GM10248 (cell line): ENCODE measurements at regions of chr1 and their contacts with region 1.

Region 1: GRCh38 chr1:225474986-225475820 is 47.4 kb upstream of the LBR start:
- DNase-seq: peak; percentile 88
- CTCF ChIP-seq: peak; percentile 100

Region 2: DNA sequence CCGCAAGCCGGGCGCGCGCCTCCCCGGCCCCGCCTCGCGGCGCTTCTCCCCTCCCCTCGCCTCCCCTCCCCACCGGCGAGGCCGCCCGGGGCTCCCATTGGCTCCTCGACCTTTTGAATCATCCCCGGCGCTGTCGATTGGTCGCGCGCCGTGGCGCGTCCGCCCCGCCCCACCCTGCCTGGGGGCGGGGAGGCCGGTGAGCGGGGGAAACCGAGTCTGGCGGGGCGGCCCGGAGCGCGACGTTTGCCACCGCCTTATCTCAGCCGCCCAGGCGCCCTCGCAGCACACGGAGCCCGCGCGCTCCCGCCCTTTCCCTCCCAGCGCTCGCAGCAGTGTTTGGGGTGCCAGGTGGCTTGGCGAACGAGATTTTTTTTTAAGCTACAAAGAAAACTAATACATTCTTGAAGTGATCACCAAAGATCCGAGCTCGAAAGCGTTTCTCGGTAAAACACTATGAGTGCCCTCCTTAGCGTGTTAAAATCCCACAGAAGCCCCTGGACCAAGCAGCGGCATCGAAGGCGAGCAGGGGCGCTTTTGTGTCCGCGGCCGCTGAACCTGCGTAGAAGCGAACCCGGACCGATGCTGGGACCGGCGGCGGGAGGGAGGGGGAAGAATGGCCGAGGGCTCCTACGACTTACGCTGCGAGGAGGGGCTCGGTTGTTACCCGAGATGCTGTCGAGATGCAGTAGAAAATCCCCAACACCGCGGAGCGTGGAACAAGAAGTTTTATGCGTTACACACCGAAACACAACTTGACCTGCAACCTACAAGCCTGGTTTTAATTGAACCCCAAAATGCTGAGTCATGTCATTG is 46.9 kb before region 1 on chr1:
- CTCF ChIA-PET with region 1: interaction called, 11 read pairs
- POLR2A ChIA-PET with region 1: no interaction called
- DNase-seq: peak; percentile 96
- CTCF ChIP-seq: no peak

Region 3: DNA sequence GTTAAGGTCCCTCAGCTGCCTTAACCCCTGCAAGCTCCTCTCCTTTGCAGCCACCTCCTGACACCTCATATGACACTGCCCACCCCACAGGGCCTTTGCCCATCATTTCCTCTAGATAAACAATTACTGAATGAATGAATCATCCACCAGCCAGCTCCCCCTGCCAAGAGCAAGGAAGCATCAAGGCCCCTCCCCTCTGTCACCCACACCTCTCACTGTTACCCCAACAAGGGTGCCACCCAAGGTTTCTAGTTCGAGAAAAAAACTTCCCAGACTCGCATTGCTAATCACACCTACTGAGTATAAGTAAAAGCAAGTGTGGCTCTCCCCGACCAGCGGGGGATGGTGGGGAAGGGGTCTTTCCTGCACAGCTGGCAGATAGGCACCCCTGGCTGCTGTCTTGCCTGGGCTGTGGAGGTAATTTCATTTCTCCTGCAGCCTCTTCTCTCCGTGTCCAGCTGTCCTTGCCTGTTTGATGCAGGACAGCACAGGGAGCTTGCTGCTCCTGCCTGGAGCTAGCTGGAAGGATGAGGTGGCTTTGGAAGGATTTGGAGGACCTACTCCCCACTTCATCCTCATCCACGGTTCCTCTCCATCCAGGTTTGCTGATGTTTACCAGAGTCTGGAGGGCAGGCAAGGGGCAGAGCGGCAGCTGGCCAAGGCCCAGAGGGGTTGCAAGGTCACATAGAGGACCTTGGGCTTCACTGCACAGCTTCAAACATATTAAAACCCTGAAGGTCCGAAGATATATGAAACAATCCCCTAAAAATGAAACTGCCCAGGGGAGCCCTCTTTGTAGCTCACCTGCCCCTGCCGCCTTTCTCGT is 14.3 kb before region 1 on chr1:
- CTCF ChIA-PET with region 1: interaction called, 27 read pairs
- POLR2A ChIA-PET with region 1: no interaction called
- DNase-seq: no peak
- CTCF ChIP-seq: no peak

Region 4: DNA sequence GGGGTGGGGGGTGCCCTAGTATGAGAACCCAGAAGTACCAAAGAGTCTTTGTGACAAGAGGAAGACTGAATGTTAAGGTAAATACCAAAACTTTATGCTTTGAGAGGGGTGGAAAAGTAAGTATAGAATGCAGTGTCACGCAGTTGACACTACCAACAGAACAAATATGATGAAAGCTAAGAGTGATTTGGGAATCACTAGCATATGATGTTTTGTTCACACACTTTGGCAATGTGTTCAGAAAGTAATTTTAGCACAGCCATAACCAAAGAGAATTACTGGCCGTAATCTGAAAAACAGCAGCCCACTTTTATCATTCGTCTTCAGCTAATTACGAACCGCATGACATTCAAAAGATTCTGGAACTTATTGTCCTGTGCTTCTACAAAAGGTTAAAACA is 118.2 kb after region 1 on chr1:
- CTCF ChIA-PET with region 1: no interaction called
- POLR2A ChIA-PET with region 1: no interaction called
- DNase-seq: no peak
- CTCF ChIP-seq: no peak

Region 5: DNA sequence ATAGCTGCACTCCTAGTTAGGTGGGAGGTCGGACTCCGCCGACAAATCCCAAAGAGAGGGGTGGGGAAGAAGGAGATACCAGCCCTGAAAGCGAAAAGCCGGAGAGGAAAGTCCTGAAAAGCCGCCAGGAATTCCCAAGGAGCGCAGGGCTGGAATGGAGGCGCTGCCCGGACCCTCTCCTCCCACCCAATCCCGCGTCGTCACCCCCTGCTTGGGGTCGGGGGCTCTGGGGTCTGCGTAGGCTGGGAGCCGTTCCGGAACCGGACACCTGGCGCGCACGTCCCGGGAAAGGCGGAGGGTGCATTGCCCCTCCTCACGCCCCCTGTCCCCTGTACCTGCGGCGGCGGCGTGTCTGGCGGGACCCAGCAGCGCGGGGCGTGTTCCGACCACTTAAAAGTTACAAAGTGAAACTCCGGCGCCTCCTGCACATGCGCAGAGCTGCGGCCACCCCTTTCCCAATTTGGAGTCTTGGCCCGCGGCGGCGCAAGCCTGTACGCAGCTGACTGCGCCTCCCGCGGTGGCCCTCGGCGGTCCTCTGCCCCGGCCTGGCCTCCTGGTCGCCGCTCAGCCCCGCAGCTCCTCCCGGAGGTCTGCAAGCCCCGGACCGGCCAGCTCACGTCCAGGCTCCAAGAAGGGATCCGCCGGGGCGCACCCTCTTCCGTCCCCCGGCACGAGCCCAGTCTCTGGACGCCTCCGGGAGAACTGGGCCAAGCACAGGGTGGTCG is 406.9 kb after region 1 on chr1 and contains the start of gene TMEM63A:
- CTCF ChIA-PET with region 1: interaction called, 14 read pairs
- POLR2A ChIA-PET with region 1: no interaction called
- DNase-seq: peak; percentile 96
- CTCF ChIP-seq: peak; percentile 34

Region 6: DNA sequence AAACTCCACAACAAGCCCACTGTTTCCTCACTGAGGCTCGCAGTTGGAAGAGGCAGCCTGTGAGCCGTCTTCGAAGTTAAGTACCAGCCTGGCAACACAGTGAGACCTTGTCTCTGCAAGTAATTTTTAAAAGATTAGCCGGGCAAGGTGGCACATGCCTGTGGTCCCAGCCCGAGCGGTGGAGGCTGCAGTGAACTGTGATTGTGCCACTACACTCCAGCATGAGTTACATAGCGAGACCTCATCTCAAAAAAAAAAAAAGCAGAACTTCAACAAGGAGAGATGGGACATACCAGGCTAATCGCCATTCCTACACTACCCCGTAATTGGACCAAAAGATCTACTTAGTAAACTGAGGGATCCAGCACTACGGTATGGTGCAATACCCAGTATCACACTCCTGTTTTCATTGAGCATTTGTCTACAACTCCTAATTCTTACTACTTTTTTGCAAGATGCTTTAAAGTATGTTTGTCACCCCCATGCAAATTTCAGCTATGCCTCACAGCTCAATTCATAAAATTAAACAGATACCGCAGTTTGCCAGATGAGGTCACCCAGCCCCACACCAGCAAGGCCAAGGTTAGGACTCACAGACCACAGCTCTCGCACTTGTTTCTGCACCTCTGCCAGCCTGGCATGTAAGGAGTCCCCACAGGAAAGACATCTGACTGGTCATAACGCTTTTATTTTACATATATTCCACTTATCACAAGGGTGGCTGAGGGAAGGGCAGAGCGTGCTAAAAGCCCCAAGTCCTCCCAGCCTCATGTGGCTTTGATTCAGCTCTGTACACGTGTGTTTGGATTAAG is 502.9 kb after region 1 on chr1:
- CTCF ChIA-PET with region 1: interaction called, 129 read pairs
- POLR2A ChIA-PET with region 1: no interaction called
- DNase-seq: peak; percentile 67
- CTCF ChIP-seq: peak; percentile 26

Region 7: DNA sequence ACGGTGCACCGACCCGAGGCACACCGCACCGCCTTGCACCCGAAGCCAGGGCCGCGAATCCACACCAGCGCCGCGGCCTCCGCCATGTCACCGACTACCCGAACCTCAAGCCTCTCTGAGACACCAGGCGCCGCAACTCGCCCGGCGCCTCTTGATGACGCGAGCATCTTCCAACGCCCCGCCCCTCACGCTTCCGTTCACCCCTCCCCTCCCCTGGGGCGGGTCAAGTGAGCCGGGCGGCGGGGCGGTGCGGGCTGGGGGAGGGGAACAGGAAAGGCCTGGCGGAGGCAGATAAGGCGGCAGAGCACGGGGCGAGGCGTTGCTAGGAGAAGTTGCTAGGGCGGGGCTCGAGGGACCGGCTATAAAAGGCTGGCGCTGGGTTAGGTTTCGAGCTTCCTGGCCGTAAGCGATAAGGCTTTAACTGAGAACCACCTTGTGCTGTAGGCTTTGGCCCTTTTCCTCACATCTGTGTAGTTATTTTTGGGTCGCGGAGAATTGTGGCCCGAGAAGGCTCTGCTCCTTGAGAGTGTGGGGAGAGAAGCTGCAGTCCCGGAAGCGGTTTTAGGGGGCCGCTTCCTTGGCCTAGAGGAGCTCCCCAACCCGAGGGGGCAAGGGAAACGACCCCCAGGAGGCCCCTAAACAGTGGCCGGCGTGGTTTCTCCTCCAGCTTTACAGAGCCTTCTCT is 524.2 kb after region 1 on chr1 and contains the start of gene SDE2:
- CTCF ChIA-PET with region 1: interaction called, 14 read pairs
- POLR2A ChIA-PET with region 1: no interaction called
- DNase-seq: peak; percentile 97
- CTCF ChIP-seq: no peak

Region 8: DNA sequence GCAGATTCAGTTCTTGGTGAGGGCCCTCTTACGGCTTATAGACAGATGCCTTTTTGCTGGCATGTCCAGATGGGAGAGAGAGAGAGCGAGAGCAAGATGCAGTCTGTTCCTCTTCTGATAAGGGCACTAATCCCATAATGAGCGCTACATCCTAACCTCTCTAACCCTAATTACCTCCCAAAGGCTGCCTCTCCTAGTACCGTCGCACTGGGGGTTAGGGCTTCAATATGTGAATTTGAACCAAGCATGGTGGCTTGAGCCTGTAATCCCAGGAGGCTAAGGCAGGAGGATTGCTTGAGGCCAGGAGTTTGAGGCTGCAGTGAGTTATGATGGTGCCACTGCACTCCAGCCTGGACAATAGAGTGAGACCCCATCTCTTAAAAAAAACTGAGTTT is 534.4 kb after region 1 on chr1:
- CTCF ChIA-PET with region 1: no interaction called
- POLR2A ChIA-PET with region 1: no interaction called
- DNase-seq: no peak
- CTCF ChIP-seq: no peak